A673 (cell line): ENCODE measurements at regions of chr5 and their contacts with region 1.

Region 1: DNA sequence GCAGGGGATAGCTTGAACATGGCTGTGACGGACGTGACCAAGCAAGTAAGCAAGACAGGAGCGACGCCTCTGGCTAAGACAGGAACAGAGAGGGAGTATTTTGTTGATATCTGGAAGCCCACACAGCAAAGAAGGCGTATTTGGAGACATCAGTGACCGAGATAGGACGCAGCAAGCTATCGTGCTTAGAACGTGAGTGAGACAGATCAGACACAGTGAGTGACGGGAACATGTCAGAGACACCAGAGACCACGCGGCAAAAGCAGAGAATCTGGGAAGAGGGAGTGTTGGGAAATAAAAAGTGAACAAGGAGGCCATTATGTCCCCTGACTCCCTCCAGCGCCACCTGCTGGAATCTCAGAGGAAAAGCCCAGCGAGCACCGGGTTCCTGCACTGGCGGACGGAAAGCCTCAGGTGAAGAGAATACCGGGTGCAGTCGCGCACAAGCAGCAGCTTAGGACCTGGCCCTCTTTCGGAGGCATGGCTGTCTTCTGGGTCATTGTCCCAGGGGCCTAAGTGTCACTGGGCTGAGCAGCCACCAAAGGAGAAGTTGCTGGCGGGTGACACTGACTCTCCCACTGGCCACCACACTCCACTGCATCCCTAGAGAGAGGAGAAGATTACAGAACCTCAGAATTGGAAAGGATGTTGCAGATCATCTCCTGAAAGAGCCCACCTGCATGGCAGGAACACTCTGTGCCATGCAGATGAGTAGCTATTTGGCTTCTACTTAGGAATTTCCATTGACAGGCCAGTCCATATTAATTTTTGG is 99.1 kb downstream of the FBXO38 start:
- DNase-seq: peak; percentile 67
- H3K4me3 ChIP-seq: no peak overlapping the region
- H3K27ac ChIP-seq: no peak overlapping the region
- H3K4me1 ChIP-seq: no peaks in the 10 kb centered on the region
- H3K27me3 ChIP-seq: peaks cover 74% of the 10 kb centered on the region
- CTCF ChIP-seq: peak; percentile 86

Region 2: DNA sequence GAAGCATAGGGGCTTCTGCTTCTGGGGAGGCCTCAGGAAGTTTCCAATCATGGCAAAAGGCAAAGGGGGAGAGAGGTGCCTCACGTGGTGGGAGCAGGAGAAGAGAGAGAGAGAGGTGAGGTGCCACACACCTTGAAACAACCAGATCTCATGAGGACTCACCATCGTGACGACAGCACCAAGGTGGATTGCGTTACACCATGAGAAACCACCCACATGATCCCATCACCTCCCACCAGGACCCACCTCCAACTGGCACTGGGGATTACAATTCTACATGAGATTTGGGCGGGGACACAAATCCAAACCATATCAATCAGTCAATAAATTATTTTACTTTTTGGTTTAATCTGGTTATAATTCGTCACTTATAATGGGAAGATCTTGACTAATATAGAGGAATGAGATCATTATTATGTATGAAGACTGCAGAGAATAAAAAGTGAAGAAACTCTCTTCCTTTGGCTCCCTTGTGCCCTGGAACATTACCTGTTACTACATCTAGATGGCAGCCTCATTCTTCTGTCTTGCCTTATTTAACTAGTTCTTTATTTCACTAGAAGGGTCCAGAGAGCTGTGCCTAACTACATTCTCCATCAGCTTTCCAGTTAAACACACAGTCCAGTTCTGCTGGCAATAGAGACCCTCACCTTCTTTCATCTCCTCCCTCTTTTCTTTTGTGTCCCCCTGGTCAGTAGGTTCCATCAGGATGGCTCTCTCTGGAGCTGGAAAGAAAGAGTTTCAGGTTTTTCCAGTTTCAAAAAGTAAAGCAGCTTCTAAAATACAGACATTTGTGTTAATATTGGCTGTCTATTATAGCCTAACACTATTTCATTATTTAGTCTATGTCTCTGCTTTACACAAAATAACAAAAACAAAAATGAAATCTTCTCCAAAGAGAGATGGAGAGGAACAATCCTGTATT is 192.3 kb before region 1 on chr5:
- CTCF ChIA-PET with region 1: no interaction called
- POLR2A ChIA-PET with region 1: no interaction called
- intact Hi-C with region 1: loop called (anchors 5 kb)
- DNase-seq: peak; percentile 13
- H3K4me3 ChIP-seq: no peak overlapping the region
- H3K27ac ChIP-seq: no peak overlapping the region
- H3K4me1 ChIP-seq: no peaks in the 10 kb centered on the region
- H3K27me3 ChIP-seq: peaks cover 35% of the 10 kb centered on the region
- CTCF ChIP-seq: peak; percentile 43